Activated CD4-positive, alpha-beta T cell treated with anti-CD3 and anti-CD28 coated beads for 36 hours (primary cell): ENCODE measurements at regions of chr19 and their contacts with region 1.

Region 1: GRCh38 chr19:44653977-44654774 is 10.5 kb downstream of the PVR start:
- DNase-seq: peak; percentile 89
- ATAC-seq: peak; percentile 97
- H3K4me3 Mint-ChIP-seq: no peak overlapping the region
- H3K27ac Mint-ChIP-seq: no peak overlapping the region
- H3K4me1 Mint-ChIP-seq: peaks cover 11% of the 10 kb centered on the region
- H3K27me3 Mint-ChIP-seq: no peaks in the 10 kb centered on the region

Region 2: DNA sequence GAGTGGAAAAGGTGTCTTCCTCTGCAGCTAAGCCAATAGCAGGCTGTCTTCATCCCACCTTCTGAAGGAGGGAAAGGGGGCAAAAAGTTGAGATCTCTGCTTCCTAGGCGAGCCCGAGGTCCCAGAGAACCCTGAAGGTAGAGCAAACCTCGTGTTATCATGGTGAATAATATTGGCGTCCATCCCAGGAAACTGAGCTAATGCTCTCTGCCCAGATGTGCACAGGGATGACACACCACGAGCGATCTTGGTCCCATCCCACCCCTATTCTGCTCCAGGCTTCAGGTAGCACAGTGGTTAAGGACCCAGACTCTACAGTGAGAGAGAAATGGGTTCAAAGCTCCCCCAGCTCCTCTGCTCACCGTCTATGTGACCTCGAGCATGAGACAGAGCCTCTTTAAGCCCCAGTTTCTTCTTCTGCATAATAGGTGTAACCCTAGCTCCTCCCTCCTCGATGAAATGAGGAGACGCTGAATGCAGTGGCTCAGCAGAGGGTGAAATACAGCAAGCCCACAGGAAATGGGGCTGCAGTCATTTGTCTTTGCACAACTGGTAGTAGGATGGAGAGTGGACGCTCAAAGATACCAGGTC is 114.8 kb before region 1 on chr19:
- CTCF ChIA-PET with region 1: no interaction called
- POLR2A ChIA-PET with region 1: no interaction called
- intact Hi-C with region 1: no loop called
- DNase-seq: no peak
- ATAC-seq: no peak
- H3K4me3 Mint-ChIP-seq: no peak overlapping the region
- H3K27ac Mint-ChIP-seq: no peak overlapping the region
- H3K4me1 Mint-ChIP-seq: no peaks in the 10 kb centered on the region
- H3K27me3 Mint-ChIP-seq: peaks cover 19% of the 10 kb centered on the region

Region 3: DNA sequence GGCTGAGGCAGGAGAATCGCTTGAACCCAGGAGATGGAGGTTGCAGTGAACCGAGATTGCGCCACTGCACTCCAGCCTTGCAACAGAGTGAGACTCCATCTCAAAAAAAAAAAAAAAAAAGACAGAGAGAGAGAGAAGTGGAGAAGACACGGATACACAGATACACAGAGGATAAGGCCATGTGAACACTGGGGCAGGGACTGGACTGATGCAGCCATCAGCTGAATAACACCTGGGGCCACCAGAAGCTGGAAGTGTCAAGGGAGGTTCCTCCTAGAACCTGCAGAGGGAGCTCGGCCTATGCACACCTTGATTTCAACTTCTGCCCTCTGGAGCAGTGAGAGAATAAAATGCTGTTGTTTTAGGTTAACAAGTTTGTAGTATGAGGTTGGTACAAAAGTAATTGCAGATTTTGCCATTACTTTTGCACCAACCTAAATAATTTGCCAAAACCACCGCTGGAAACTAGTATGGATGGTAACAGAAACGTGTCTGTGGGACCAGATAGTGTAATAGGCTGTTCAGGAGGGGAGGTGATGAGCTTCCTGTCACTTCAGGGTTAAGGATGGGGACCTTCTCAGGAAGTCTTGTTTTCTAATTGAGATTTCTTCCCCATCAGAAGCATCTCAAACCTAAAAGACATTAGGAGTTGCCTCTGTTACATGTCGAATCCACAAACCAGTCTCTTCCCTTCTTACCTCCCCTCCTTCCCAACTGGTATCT is 77.2 kb before region 1 on chr19:
- CTCF ChIA-PET with region 1: interaction called, 35 read pairs
- POLR2A ChIA-PET with region 1: no interaction called
- intact Hi-C with region 1: loop called (anchors 1 kb)
- DNase-seq: peak; percentile 63
- ATAC-seq: peak; percentile 72
- H3K4me3 Mint-ChIP-seq: no peak overlapping the region
- H3K27ac Mint-ChIP-seq: no peak overlapping the region
- H3K4me1 Mint-ChIP-seq: no peaks in the 10 kb centered on the region
- H3K27me3 Mint-ChIP-seq: no peaks in the 10 kb centered on the region